ENCODE measurements at regions of chr9 and their contacts with region 1.

Region 1: GRCh38 chr9:111483862-111484571 is at the start of gene ECPAS:
- DNase-seq: peak in 40 of 42 donors; percentile 39 to 83 (median 67)

Region 2: GRCh38 chr9:110217656-110218099 is 1266.3 kb before region 1 on chr9:
- intact Hi-C with region 1: no loop called
- DNase-seq: peak in 3 of 42 donors; percentile 17 to 47 (median 24)

Region 3: DNA sequence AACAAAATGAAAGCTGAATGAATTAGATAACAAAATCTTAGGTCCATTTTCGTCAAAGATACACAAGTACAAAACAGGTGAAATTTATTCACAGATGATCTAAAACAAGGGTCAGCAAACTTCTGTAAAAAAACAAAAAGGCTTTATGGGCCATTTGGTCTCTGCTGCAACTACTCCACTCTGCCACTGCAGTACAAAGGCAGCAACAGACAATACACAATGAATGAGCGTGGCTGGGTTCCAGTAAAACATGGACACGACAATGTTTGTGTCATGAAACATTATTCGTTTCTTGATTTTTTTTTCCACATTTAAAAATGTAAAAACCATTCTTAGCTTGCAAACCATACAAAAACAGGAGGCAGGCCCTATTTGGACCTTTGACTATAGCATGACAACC is 71.7 kb before region 1 on chr9:
- intact Hi-C with region 1: loop called (anchors 10 kb)
- DNase-seq: peak in 40 of 42 donors; percentile 14 to 93 (median 77)

Region 4: GRCh38 chr9:111525056-111525977 is 41.3 kb after region 1 on chr9 and contains the start of gene ZNF483:
- intact Hi-C with region 1: loop called (anchors 5 kb)
- DNase-seq: peak; percentile 68 to 95 (median 88)